Right ventricle myocardium inferior (tissue), 1 donor: ENCODE measurements at regions of chr22 and their contacts with region 1.

Region 1: GRCh38 chr22:41688365-41689211 is at the start of gene SNU13:
- DNase-seq: peak; percentile 97
- ATAC-seq: peak; percentile 96
- total RNA-seq, gene SNU13: 216 TPM

Region 2: DNA sequence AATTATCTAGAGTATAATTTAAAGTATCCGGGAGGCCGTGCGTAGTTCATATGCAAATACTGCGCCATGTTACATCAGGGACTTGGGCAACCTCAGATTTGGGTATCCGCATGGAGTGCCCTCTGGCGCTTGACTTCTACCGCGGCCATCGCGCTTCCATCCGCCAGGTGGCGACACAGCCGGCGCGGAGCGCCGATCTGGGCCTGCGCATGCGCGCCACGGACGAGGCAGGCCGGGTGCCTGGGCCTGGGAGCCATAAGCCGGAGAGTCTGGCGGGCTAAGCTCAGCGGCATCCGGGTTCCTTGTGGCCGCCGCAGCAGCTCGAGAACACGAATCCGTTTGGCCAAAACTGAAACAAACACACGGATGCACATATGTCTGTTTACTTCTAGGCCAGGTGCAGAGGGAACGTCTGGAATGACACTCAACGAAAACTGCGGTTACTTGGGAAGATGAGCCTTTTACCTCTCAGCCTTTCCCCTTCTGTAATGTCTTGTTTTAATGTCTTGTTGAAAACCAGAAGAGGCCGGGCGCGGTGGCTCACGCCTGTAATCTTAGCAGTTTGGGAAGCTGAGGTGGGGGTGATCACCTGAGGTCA is 21.8 kb before region 1 on chr22:
- intact Hi-C with region 1: loop called (anchors 2 kb)
- DNase-seq: peak; percentile 96
- ATAC-seq: peak; percentile 92